ENCODE measurements at regions of chr5 and their contacts with region 1.

Region 1: GRCh38 chr5:14727428-14727865 is 62.9 kb downstream of the OTULIN start:
- DNase-seq: peak; percentile 76 to 88 (median 78)
- ATAC-seq: peak; percentile 83
- H3K4me3 ChIP-seq: no peak overlapping the region
- H3K4me1 ChIP-seq: peaks cover 15% of the 10 kb centered on the region
- CTCF ChIP-seq: peak; percentile 90

Region 2: GRCh38 chr5:14505310-14506032 is 222.0 kb before region 1 on chr5:
- intact Hi-C with region 1: no loop called
- DNase-seq: no peak
- ATAC-seq: no peak
- H3K4me3 ChIP-seq: no peak overlapping the region
- H3K4me1 ChIP-seq: no peaks in the 10 kb centered on the region
- CTCF ChIP-seq: no peak

Region 3: DNA sequence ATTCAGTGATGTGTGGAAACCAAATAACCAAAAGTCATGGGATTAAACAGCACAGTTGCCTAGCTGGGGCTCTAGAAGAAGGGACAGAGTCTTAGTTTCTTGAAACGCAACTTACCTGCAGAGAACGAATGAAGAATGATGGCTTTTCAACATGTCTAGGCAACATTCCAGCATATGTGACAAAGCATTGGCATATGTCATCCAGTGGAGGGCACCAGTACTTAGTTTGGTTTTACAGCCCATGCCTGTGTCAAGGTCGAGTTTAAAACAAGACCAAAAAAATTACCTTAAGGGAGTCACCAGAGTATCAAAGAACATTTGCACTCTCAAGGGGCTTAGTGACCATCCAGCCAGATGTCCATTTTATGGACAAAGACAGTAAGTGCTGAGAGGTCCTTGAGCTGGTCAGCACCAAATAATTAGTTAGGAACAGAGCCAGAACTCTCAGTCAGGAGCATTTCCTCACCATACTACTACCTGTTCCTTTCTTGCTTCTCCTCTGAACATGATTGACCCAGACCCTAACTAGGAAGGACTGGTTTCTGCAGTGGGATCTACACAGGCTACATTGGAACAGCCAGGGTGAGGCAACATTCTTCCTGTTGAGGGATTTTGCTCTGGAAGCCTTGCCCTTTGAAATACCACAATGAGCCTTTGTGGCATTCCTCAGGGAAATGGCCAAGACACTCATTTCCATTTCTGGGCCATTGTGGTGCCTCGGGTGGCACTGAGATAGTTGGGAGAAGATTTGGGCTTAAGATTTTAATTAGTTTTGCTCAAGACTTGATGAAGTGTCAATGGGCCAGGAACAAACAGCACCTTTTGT is 219.6 kb after region 1 on chr5:
- intact Hi-C with region 1: loop called in 1 of 2 experiments (anchors 5 kb)
- DNase-seq: peak in 1 of 3 donors; percentile 52
- ATAC-seq: peak; percentile 92
- H3K4me3 ChIP-seq: no peak overlapping the region
- H3K4me1 ChIP-seq: peaks cover 5% of the 10 kb centered on the region
- CTCF ChIP-seq: no peak

Region 4: DNA sequence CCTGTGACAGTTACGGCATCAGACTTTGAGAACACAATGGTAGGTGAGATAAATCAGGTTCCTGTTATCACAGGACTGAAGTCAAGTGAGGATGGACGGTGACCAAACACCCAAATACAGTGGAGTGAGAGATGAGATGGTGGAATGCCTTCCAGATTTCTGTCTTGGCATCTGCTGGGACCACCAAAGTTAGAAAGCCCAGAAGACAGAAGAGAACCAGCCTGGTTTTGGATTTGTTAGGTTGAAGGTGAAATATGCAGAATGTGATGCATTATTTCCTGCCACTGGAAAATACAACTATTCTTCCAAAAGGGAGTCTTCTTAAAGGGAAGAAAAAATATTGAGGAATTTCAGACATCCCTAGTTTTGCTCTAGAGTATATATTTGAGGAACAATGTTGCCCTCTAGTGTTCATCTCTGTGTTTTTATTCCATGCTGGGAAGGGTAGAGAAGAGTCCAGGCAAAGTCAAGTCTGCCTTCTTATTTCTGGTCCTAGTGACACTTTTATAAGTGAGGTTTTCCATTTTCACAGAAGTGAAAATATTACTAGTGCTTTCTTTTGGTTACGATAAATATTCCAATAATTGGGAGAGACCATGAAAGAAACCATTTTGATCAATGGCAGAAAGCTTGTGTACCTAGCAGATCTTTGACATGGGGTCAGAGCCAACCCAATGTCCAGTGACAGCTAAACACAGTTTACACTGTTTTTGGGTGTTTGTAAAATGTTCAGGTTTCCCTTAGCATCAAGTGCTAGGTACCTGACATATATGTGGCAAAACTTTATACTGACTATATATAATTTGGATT is 286.4 kb after region 1 on chr5:
- intact Hi-C with region 1: loop called (anchors 5 kb)
- DNase-seq: peak in 1 of 3 donors; percentile 46
- ATAC-seq: peak; percentile 72
- H3K4me3 ChIP-seq: no peak overlapping the region
- H3K4me1 ChIP-seq: peaks cover 8% of the 10 kb centered on the region
- CTCF ChIP-seq: no peak